ENCODE measurements at regions of chr2 and their contacts with region 1.

Region 1: GRCh38 chr2:177148477-177149154 is 64.0 kb upstream of the HNRNPA3 start:
- DNase-seq: peak; percentile 73
- H3K4me3 ChIP-seq: peak overlapping the region in 1 of 2 donors; percentile 6
- H3K27ac ChIP-seq: peak overlapping the region in 1 of 2 donors; percentile 17
- H3K4me1 ChIP-seq: no peaks in the 10 kb centered on the region
- H3K27me3 ChIP-seq: peaks cover 6% of the 10 kb centered on the region
- CTCF ChIP-seq: peak; percentile 22 to 67 (median 65)
- POLR2A ChIP-seq: no peak

Region 2: DNA sequence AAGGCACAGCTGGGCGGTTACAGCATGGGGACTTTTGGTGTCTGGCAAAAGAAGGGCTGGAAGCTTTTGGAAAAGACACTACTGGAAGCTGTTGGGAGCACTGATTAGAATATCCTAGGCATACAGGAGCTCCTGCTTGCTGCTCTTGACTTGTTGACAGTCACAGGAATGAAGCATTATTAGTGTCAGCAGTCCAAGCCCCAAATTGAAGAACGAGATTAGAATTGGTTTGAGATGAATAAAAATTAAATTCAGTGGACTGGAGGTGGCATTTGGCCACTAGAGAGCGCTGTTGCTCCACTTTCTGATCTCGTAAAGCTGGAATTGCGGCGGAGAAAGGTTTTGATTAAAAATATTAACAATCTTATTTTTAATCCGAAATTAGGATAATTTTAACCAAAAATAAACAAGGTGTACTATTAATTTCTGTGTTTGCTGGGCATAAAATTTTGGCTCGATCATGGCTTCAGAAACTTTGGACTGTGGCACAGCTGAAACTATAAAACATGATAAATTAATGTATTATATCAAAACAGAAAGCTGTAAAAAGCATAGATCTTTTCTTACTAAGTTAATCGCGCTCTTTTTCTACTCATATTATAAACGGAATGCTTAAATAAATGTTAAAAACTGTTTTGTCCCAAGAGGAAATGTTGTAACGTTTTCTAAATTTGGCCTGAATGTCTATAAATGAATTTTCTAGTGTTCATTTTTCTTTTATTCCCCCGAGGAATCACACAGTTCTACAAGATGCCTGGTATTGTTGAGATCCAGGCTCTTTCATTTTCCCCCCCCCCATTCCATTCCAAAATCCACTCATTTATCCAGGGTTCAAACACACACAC is 1021.5 kb before region 1 on chr2:
- intact Hi-C with region 1: loop called (anchors 5 kb)
- DNase-seq: peak; percentile 55
- H3K4me3 ChIP-seq: no peak overlapping the region
- H3K27ac ChIP-seq: no peak overlapping the region
- H3K4me1 ChIP-seq: no peaks in the 10 kb centered on the region
- H3K27me3 ChIP-seq: no peaks in the 10 kb centered on the region
- CTCF ChIP-seq: peak; percentile 83 to 97 (median 91)
- POLR2A ChIP-seq: no peak

Region 3: DNA sequence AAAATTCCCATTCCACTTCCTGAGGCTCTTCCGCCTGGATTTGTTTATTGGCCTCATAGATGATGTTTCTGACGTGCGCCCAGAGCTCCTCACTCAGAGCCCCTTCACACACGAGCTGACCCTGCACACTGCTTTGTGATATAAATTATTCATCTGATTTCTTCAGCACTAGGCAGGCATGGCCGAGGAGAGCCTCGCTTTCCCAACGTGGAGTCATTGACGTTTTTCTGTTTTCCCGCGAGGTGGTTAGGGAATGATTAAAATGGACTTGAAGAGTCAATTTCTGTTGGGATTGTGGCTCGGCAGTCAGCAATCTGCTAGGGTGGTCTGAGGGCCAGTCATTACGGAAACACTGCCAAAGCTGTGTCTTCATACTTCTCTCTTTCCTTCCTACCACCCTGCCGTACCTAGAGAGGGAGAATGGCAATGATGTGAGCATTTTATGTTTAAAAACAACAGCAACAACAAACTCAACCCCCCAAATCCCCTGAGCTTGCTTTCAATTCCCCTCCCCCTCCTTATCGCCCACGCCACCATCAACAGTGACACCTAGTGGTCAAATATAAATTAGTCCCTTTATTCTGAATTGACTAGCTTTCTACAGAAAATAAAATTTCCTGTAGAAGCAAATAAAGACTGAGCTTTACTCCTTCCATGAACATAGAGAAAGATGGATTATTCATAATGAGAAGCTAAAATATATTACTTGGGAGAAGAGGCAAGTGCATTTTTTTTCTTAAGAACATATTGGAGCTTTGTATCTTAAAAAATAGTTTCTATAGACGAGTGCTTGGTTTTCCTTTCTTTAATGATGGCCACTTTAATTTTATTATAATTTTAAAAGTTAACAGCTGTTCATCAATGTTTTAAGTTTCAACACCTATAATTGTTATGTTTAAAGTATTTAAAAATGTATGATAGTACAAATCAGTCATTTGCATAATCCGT is 594.2 kb before region 1 on chr2:
- intact Hi-C with region 1: loop called (anchors 5 kb)
- DNase-seq: no peak
- H3K4me3 ChIP-seq: peak overlapping the region; percentile 22 to 24
- H3K27ac ChIP-seq: peak overlapping the region in 1 of 2 donors; percentile 19
- H3K4me1 ChIP-seq: no peaks in the 10 kb centered on the region
- H3K27me3 ChIP-seq: no peaks in the 10 kb centered on the region
- CTCF ChIP-seq: peak; percentile 55 to 88 (median 71)
- POLR2A ChIP-seq: no peak

Region 4: DNA sequence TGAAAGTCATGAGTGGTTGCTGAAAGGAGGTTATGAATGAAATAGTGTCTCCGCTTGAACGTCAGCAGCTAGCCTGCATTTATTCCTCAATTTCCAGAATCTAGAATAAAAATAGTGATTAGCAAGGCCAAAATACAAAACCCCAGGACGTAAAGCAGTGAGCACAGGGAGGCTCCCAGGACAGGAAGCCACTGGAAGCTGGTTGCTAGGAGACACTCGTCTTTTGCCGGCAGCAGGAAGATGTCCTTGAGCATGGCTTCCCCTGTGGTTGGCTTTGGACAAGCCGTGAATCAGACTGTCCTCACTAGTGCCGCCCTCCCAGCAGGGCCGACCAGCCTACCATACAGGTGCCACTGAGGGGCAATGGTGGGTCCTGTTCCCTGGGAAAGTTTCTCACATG is 505.0 kb before region 1 on chr2:
- intact Hi-C with region 1: loop called (anchors 10 kb)
- DNase-seq: no peak
- H3K4me3 ChIP-seq: no peak overlapping the region
- H3K27ac ChIP-seq: no peak overlapping the region
- H3K4me1 ChIP-seq: no peaks in the 10 kb centered on the region
- H3K27me3 ChIP-seq: peaks cover 18% of the 10 kb centered on the region
- CTCF ChIP-seq: no peak
- POLR2A ChIP-seq: no peak

Region 5: DNA sequence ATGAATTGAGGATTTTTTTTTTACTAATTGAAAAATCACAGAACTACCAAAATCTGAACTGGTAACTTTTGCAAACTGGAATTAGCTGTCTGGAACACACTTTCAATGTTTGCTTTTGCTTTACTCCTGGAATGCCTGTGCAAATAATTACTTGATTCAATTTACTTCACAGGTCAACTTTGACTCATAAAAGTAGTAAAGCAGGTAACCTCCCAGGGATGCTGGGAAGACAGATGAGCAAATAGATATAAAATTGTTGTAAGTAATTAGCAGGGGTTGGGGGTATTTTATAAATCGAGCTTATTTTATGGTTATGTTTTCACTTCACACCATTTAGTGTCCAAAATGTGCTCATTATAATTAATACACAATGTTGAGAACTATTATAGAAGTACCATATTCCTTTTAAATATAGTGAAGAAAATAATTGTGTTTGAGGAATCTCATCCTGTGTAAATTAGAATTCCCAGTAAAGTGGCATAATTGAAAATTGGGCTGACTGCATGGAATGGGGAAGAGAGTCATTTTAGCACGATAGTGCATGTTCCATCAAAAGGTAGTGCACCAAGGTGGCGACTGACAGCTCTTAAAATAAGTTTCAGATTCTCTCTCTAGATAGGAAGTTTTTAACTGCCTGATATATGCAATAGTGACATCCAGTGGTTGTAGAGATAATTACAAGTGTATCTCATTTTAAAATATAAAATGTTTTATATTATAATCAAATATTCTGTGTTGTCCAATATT is 334.1 kb before region 1 on chr2:
- intact Hi-C with region 1: loop called (anchors 10 kb)
- DNase-seq: no peak
- H3K4me3 ChIP-seq: no peak overlapping the region
- H3K27ac ChIP-seq: no peak overlapping the region
- H3K4me1 ChIP-seq: peaks cover 3% of the 10 kb centered on the region
- H3K27me3 ChIP-seq: no peaks in the 10 kb centered on the region
- CTCF ChIP-seq: peak; percentile 21 to 73 (median 56)
- POLR2A ChIP-seq: no peak

Region 6: DNA sequence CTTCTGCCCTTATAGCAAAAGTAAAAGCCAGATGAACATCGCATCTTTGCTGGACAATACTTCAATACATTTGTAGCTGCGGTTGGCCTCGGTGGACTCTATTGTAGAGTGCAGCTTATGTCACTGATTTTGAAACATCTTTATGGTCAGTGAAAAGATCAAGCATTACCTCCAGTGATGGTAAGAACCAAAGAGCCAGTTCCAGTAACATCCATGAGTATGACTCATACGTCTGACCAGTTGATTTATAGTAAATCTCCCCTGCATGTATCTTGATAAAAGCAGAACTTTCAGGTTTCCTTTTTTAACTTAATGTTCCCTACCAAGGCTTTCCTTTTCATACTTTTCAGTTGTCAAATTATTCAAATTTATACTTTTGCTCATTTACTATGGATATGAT is 55.2 kb before region 1 on chr2:
- intact Hi-C with region 1: no loop called
- DNase-seq: no peak
- H3K4me3 ChIP-seq: no peak overlapping the region
- H3K27ac ChIP-seq: no peak overlapping the region
- H3K4me1 ChIP-seq: no peaks in the 10 kb centered on the region
- H3K27me3 ChIP-seq: no peaks in the 10 kb centered on the region
- CTCF ChIP-seq: no peak
- POLR2A ChIP-seq: no peak

Measured in prostate gland (tissue), 2 donors.